Mucosa of descending colon (tissue), 3 donors: ENCODE measurements at regions of chr20 and their contacts with region 1.

Region 1: GRCh38 chr20:43749734-43750294 is 23.0 kb upstream of the GTSF1L start:
- DNase-seq: peak; percentile 82 to 90 (median 87)
- ATAC-seq: peak; percentile 92
- H3K4me3 ChIP-seq: no peak overlapping the region
- H3K4me1 ChIP-seq: no peaks in the 10 kb centered on the region
- CTCF ChIP-seq: peak; percentile 100

Region 2: DNA sequence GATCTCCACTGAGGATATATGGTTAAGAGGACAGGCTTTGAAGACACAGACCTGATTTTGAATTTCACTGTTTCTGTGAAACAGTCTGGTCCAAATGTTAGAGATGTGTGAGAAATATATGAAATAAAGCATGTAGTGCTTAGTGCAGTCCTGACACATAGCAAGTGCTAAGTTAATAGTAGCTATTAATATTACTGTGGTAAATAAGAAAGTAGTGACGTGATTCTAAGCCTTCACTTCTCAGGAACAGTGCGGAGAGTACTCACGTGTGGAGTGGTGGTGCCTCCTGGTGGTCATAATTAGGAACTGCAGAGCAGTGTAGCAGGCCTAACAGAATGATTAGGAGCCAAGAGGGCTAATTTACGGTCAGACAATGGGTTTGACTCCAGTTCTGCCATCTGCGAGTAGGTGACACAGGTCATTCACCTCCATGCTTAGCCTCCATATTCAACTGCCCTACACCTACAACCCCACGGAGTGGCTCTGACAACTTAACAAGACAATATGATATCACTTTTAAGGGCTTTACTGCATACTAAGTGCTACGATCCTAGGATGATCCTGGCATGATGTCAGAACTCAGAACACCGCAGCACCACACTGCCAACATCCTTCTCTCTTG is 330.9 kb after region 1 on chr20:
- intact Hi-C with region 1: loop called (anchors 2 to 5 kb)
- DNase-seq: peak in 2 of 3 donors; percentile 73 to 86
- ATAC-seq: peak; percentile 98
- H3K4me3 ChIP-seq: no peak overlapping the region
- H3K4me1 ChIP-seq: no peaks in the 10 kb centered on the region
- CTCF ChIP-seq: peak; percentile 89